Sigmoid colon (tissue), 7 donors: ENCODE measurements at regions of chr2 and their contacts with region 1.

Region 1: DNA sequence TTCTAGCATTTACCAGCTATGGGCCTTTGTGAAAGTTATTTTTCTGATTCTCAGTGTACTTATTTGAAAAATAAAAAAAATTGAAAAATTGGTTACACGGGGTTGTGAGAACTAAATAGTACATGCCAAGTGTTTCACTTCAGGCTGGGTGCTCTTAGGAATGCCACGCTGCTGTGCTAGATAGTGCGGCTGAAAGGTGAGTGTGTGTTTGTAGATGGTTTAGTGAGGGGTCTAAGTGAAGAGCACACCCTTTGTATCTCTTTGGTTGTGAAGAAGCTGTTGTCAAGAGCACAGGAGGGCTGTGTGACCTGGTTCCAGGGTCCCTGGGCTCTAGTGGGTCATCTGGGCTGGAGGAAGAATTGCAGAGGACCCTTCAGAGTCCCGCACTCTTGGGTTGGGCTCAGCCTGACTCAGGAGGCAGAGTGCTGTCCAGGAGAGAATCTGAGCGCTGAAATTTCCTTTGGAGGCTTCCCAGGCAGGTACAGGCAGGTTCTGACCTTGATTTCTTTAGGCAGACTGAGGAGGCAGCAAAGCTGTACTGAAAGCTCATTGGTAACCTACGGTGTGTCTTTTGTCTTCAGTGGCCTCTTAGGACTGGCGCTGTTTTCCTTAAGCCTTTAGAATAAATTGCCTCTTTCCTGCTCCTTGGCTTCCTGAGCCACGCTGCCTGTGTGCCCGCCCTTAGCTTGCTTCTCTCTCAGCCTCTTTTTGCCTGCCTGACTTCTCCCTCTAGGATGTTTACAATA is 44.4 kb downstream of the MAP4K4 start:
- DNase-seq: no peak
- H3K4me3 ChIP-seq: no peak overlapping the region
- H3K27ac ChIP-seq: peak overlapping the region; percentile 10 to 61 (median 36)
- H3K4me1 ChIP-seq: peaks cover 0 to 64% (median 59%) of the 10 kb centered on the region in 4 donors
- H3K27me3 ChIP-seq: no peaks in the 10 kb centered on the region
- CTCF ChIP-seq: no peak
- EP300 ChIP-seq: no peak
- POLR2A ChIP-seq: no peak

Region 2: GRCh38 chr2:101756266-101756665 is 14.3 kb after region 1 on chr2:
- intact Hi-C with region 1: loop called (anchors 2 kb)
- DNase-seq: no peak
- H3K4me3 ChIP-seq: no peak overlapping the region
- H3K27ac ChIP-seq: no peak overlapping the region
- H3K4me1 ChIP-seq: peaks cover 0 to 64% (median 48%) of the 10 kb centered on the region in 4 donors
- H3K27me3 ChIP-seq: no peaks in the 10 kb centered on the region
- CTCF ChIP-seq: no peak
- EP300 ChIP-seq: no peak
- POLR2A ChIP-seq: no peak

Region 3: DNA sequence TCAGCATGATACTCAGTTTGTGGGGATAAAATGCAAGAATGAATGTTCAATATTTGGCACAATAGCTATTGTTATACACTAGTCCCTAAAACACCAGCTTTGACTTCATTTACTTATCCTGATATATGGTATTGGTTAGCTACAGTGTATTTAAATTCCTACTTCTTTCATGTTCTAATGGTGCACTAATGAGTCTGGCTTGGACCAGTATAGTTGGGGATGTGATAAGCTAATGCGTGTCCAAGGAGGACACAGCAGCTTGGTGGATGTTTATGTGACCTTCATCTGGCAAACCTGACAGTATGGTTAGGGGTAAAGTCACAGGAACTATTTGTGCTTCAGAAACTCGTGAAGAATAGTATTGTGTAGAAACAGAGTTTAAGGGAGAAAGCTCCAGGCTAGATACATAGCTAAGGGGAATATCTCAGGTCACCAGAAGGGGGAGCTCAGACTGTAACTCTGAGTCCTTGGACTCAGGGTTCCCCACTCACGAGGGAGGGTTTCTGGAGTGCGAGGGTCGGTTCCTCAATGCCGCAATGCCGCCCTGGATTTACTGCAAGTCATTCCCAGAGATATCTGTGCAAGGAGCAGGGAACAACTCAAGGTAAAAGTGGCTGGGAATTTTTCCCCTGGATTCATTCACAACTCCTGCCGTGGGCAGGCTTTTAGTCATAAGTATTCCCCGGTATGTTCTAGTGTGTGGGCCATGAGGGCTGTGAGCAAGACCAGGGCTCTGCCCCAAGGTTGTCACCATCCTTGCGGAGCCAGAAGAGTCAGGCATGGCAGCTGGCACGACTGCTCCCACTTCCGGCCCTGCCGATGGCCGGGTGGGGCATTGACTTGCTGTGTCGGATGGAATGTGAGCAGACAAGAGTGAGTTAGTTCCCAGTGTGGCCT is 264.3 kb after region 1 on chr2:
- intact Hi-C with region 1: no loop called
- DNase-seq: no peak
- H3K4me3 ChIP-seq: no peak overlapping the region
- H3K27ac ChIP-seq: no peak overlapping the region
- H3K4me1 ChIP-seq: peaks cover 0 to 3% (median 0%) of the 10 kb centered on the region in 4 donors
- H3K27me3 ChIP-seq: no peaks in the 10 kb centered on the region
- CTCF ChIP-seq: peak in 3 of 4 experiments; percentile 33 to 44 (median 38)
- EP300 ChIP-seq: no peak
- POLR2A ChIP-seq: no peak